ENCODE measurements at regions of chrX and their contacts with region 1.

Region 1: DNA sequence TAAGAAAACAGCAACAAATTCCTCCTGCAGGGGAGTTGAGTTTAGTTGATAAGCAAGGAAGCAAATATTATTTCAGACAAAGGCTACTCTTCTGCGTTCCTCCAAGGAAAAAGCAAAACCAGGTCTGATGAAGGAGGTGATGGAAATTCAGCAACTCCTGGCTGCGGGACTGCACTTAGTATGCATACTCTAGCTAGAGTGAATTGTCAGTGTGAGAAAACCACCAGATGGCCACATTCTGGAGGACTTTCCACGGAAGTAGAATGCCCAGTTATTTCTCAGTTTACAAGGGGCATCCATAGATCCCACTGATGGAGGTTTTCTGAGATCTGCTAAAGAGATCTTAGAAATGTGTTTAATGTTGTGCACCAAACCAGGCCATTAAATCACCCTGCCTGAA is 338.6 kb upstream of the PUDP start:
- DNase-seq: no peak
- H3K4me3 ChIP-seq: no peak overlapping the region
- H3K27ac ChIP-seq: no peak overlapping the region
- H3K4me1 ChIP-seq: no peaks in the 10 kb centered on the region
- H3K27me3 ChIP-seq: no peaks in the 10 kb centered on the region
- CTCF ChIP-seq: no peak

Region 2: GRCh38 chrX:7109049-7109531 is 377.4 kb before region 1 on chrX:
- CTCF ChIA-PET with region 1: interaction called, 12 read pairs
- dilution Hi-C with region 1: no loop called
- in situ Hi-C with region 1: no loop called
- intact Hi-C with region 1: no loop called
- DNase-seq: no peak
- H3K4me3 ChIP-seq: no peak overlapping the region
- H3K27ac ChIP-seq: no peak overlapping the region
- H3K4me1 ChIP-seq: peaks cover 10% of the 10 kb centered on the region
- H3K27me3 ChIP-seq: no peaks in the 10 kb centered on the region
- CTCF ChIP-seq: no peak